ENCODE measurements at regions of chr5 and their contacts with region 1.

Region 1: GRCh38 chr5:115180165-115180709 is 10.5 kb upstream of the TRIM36 start:
- DNase-seq: peak; percentile 80
- H3K4me3 Mint-ChIP-seq: peak overlapping the region; percentile 90
- H3K27ac Mint-ChIP-seq: no peak overlapping the region
- H3K4me1 Mint-ChIP-seq: peaks cover 7% of the 10 kb centered on the region
- H3K27me3 Mint-ChIP-seq: peaks cover 73% of the 10 kb centered on the region

Region 2: GRCh38 chr5:115132465-115132864 is 47.8 kb before region 1 on chr5:
- intact Hi-C with region 1: no loop called
- DNase-seq: no peak
- H3K4me3 Mint-ChIP-seq: no peak overlapping the region
- H3K27ac Mint-ChIP-seq: no peak overlapping the region
- H3K4me1 Mint-ChIP-seq: no peaks in the 10 kb centered on the region
- H3K27me3 Mint-ChIP-seq: peaks cover 24% of the 10 kb centered on the region

Region 3: GRCh38 chr5:115194676-115195075 is 14.4 kb after region 1 on chr5:
- intact Hi-C with region 1: no loop called
- DNase-seq: no peak
- H3K4me3 Mint-ChIP-seq: no peak overlapping the region
- H3K27ac Mint-ChIP-seq: no peak overlapping the region
- H3K4me1 Mint-ChIP-seq: no peaks in the 10 kb centered on the region
- H3K27me3 Mint-ChIP-seq: peaks cover 10% of the 10 kb centered on the region

Region 4: GRCh38 chr5:115209279-115209678 is 29.0 kb after region 1 on chr5:
- intact Hi-C with region 1: loop called (anchors 2 kb)
- DNase-seq: peak; percentile 90
- H3K4me3 Mint-ChIP-seq: peak overlapping the region; percentile 24
- H3K27ac Mint-ChIP-seq: peak overlapping the region; percentile 68
- H3K4me1 Mint-ChIP-seq: peaks cover 19% of the 10 kb centered on the region
- H3K27me3 Mint-ChIP-seq: no peaks in the 10 kb centered on the region